ENCODE measurements at regions of chr6 and their contacts with region 1.

Region 1: DNA sequence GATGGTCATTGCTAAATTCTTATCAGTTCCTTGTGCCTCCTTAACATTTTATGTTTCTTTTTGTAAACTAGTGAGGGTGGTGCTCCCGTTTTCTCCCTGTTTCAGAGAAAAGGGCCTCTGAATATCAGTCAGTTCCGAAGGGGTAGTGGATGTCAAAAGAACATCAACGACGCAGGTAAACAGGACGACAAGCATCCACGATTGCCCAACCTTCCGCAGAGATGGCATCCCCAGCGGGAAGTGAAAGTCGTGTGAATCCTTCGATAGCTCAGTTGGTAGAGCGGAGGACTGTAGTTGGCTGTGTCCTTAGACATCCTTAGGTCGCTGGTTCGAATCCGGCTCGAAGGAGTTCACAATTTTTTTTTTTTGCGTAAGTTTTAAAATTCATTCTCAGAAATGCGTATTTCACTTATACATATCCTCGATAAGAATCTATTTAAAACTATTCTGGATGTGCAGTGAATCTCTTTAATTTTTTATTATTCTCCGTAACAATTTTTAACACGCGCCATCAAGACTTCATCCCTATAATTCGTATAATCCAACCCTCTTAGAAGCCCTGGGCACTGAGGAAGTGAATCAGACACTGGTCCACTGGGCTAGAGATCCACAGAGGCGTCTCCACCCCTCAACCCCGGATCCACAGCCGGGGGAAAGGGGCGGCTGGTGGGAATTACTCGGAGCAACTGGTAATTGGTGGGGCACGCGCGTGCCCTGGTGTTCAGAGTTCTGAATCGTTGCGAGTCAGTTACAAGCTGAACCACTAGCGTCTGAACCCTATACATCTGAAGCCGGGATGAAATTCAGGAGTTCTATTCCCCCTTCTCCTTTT is 27.9 kb upstream of the ABT1 start:
- DNase-seq: peak; percentile 87
- H3K4me3 ChIP-seq: peak overlapping the region; percentile 79
- H3K27ac ChIP-seq: peak overlapping the region; percentile 39
- H3K27me3 ChIP-seq: no peaks in the 10 kb centered on the region
- CTCF ChIP-seq: peak; percentile 33

Region 2: DNA sequence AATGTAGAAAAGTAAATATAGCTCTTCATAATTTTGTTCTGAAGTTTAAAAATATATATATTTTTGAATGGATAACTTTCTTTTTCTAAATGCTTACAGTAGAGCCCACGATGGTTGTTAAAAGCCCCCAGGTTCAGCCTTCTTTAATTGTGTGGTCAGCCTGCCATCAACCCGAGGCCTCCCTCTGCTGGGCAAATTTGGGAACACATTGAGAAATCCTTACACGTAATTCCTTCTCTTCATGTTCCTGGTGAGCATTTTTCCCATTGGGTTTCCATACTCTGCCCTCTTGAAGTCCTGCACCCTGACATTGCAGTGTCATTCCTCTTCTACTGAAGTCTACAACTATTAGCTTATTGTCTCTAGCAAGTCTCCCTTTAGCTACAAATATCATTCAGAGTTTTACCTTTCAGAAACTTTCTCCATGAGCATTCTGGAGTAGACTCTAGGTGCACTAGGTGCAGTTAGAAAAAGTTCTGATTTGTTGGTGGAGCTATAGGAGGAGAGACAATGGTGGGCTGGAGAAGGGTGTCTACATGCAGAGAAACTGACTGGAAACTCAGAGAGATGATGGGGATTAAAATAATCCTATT is 565.6 kb before region 1 on chr6:
- CTCF ChIA-PET with region 1: interaction called, 14 read pairs
- POLR2A ChIA-PET with region 1: no interaction called
- DNase-seq: no peak
- H3K4me3 ChIP-seq: no peak overlapping the region
- H3K27ac ChIP-seq: no peak overlapping the region
- H3K27me3 ChIP-seq: no peaks in the 10 kb centered on the region
- CTCF ChIP-seq: peak; percentile 86

Region 3: DNA sequence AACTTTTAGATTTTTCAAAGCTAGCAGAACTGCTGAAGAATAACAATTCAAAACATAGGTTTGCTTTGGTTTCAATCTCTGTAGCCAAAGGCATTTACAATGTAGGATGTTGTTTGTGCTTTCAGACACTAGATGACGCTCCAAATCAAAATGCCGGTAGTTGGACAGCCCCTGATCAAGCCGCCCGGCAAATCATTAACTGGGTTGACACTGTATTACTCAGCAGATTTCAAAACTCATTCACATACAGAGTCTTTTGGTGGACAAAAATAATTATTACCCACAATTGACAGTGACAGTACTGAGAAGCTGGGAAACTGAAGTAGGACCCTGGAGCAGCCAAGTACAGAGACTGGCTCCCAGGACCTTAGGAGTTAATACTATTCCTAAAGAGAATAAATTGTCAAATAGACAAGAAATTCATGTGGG is 502.9 kb before region 1 on chr6:
- CTCF ChIA-PET with region 1: no interaction called
- POLR2A ChIA-PET with region 1: no interaction called
- DNase-seq: peak; percentile 62
- H3K4me3 ChIP-seq: no peak overlapping the region
- H3K27ac ChIP-seq: no peak overlapping the region
- H3K27me3 ChIP-seq: no peaks in the 10 kb centered on the region
- CTCF ChIP-seq: peak; percentile 91

Region 4: GRCh38 chr6:26322645-26323482 is 246.0 kb before region 1 on chr6:
- CTCF ChIA-PET with region 1: no interaction called
- POLR2A ChIA-PET with region 1: interaction called, 11 read pairs
- DNase-seq: no peak
- H3K4me3 ChIP-seq: peak overlapping the region; percentile 69
- H3K27ac ChIP-seq: peak overlapping the region; percentile 76
- H3K27me3 ChIP-seq: no peaks in the 10 kb centered on the region
- CTCF ChIP-seq: no peak

Region 5: DNA sequence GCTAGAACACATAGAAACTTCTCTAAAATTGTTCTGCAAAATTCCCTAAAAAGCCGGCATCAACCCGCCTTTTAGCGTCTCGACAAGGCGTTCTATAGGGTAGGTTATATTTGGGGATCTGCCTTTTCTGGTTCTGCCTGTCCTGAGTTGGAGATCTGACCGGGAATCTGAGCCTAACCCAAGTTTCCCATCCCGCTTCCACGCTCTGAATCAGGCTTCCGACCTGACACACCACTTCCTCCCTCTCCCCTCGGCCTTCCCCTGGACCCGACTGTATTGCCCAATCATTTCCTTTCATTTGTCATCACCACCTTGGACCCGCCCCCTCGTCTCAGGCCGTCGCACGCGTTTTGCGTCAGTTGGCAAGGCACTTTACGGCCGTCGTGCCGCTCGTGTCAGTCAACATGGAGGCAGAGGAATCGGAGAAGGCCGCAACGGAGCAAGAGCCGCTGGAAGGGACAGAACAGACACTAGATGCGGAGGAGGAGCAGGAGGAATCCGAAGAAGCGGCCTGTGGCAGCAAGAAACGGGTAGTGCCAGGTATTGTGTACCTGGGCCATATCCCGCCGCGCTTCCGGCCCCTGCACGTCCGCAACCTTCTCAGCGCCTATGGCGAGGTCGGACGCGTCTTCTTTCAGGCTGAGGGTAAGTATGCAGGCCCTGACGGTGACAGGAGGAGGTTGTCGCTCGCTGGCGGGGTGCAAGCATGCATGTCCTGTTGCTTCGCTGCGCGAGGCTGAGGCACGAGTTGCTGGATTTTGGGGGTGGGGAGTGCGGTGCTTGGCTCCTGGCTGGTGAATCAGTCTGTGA is 28.0 kb after region 1 on chr6 and contains the start of gene ABT1:
- CTCF ChIA-PET with region 1: interaction called, 280 read pairs
- POLR2A ChIA-PET with region 1: interaction called, 6 read pairs
- DNase-seq: peak; percentile 96
- H3K4me3 ChIP-seq: peak within 1 kb of the TSS; percentile 99
- H3K27ac ChIP-seq: peak within 1 kb of the TSS; percentile 66
- H3K27me3 ChIP-seq: no peaks in the 10 kb centered on the region
- CTCF ChIP-seq: no peak
- polyA plus RNA-seq, gene ABT1: 12.8 and 14.9 TPM in 2 replicates

Region 6: DNA sequence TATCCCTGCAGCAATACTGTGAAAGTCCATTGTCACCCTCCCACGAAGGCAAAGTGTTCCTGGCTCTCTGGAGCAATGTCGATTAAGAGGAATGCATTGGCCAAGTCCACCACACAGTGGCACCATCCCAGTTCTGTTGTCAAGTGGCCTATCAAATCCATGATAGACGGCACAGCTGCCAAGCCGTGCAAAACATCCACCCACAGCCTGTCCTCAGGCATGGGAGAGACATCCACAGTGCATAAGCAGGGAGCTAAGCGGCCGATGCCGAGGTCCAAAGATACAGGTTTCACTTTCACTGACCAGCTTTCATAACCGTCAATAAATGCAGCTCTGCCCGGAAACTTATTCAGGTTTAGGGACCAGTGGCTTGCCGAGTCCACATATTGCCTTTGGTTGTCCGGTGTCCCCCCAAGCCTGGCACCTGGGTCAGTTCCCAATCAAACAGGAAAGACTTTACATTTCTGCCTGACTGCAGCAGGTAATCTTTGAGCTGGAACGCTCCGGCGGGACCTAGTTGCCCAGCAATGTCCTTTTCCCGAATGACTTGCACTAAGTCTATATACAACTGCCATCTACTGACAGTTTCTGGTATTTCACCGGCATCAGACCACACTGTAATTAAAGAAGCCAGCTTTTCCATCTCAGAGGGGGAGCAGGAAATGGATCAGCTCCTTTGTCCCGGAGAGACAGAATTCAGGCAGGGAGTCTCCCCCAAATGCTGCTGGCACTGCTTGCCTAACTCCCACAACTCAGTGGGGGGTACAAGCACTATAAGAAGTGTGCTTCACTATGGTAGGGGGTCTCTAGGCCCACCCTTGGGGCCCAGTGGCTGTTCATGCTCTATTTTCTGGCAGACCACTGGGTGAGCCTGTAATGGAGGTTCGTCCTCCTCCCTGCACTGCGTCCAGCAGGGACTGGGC is 1787.2 kb after region 1 on chr6:
- CTCF ChIA-PET with region 1: interaction called, 10 read pairs
- POLR2A ChIA-PET with region 1: no interaction called
- DNase-seq: peak; percentile 82
- H3K4me3 ChIP-seq: peak overlapping the region; percentile 73
- H3K27ac ChIP-seq: peak overlapping the region; percentile 83
- H3K27me3 ChIP-seq: no peaks in the 10 kb centered on the region
- CTCF ChIP-seq: peak; percentile 76

Measured in AG04450 (cell line).